Ascending aorta (tissue), 2 donors: ENCODE measurements at regions of chr22 and their contacts with region 1.

Region 1: GRCh38 chr22:24244101-24244787 is 638 bp downstream of the GGT5 start:
- DNase-seq: no peak
- H3K4me3 ChIP-seq: peak overlapping the region; percentile 11 to 30
- H3K27ac ChIP-seq: peak overlapping the region; percentile 92 to 93
- H3K4me1 ChIP-seq: peaks cover 18 to 34% of the 10 kb centered on the region in 2 donors
- H3K27me3 ChIP-seq: no peaks in the 10 kb centered on the region
- CTCF ChIP-seq: no peak

Region 2: DNA sequence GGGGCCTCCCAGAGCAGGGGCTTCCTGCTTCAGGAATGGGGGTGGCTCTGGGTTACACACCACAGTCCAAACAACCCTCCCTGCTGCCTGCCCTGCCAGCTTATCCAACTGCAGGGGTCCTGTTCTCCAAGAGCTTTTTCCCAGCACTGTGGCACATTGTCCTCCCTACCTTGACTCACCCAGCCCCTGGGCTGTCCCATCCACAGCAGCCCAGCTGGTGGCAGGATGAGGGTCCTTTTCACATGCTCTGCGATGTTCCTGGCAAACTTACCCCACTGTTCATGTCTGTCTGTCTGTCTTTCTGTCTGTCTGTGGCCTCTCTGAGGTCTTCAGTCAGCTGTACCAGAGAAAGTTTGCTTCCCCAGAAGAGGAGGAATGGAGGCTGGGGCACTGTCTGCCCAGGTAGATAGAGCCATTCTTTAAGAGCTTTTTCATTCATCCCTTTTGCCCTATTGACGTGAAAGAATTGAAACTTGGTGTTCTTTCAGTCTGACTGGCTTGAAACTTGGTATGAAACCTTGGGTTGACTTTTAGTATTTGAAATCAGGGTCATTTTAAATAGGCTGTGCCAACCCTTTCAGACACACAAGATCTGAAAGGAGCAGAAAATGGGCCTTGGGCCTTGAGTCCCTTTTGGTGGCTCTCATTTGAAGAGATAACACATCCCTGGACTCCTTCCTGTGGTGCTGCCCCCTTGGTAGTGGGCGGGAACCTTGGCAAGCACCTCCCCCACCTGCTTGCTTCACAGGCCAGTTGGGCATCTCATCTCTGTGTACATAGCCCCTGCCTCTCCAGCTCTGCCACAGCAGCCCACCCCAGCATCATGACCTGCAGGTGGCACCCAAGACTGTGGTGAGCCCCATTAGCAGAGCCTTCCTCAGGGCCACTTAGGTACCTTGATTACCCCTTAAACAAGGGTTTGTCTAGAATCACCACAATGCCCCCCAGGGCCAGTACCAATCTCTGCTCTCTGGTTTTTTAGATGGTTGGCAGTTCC is 137.6 kb before region 1 on chr22:
- intact Hi-C with region 1: loop called (anchors 10 kb)
- DNase-seq: no peak
- H3K4me3 ChIP-seq: no peak overlapping the region
- H3K27ac ChIP-seq: peak overlapping the region; percentile 75 to 83
- H3K4me1 ChIP-seq: peaks cover 14 to 17% of the 10 kb centered on the region in 2 donors
- H3K27me3 ChIP-seq: no peaks in the 10 kb centered on the region
- CTCF ChIP-seq: peak in 2 of 3 experiments; percentile 14 to 47

Region 3: GRCh38 chr22:24181996-24182899 is 62.0 kb before region 1 on chr22:
- intact Hi-C with region 1: no loop called
- DNase-seq: no peak
- H3K4me3 ChIP-seq: peak overlapping the region; percentile 28 to 44
- H3K27ac ChIP-seq: peak overlapping the region; percentile 84 to 92
- H3K4me1 ChIP-seq: peaks cover 10 to 54% of the 10 kb centered on the region in 2 donors
- H3K27me3 ChIP-seq: no peaks in the 10 kb centered on the region
- CTCF ChIP-seq: peak in 1 of 3 experiments; percentile 21

Region 4: DNA sequence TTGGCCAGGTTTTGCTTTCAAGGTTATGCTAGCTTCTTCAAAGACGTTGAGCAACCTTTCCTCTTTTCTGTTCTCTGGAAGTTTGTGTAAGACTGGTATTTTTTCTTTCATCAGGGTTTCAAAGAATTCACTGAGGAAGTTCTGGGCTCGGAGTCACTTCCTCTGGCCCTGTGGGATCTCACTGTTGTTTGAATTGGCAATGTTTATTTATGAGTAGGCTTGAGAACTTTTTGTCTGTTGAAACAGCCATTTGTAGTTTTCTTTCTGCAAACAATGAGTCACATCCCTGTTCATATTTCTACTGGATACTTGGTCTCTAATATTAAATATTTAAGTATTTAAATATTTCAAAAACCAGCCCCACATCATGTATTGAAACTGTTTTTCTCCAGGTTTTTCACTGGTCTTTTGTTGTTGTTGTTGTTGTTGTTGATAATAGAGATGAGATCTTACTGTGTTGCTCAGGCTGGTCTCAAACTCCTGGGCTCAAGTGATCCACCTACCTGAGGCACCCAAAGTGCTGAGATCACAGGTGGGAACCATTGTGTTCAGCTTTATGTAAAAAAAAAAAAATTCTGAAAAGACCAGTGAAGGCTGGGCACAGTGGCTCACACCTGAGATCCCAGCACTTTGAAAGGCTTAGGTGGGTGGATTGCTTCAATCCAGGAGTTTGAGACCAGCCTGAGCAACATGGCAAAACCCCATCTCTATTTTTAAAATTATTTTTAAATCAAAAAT is 36.1 kb before region 1 on chr22:
- intact Hi-C with region 1: loop called (anchors 1 kb)
- DNase-seq: peak in 1 of 2 donors; percentile 89
- H3K4me3 ChIP-seq: no peak overlapping the region
- H3K27ac ChIP-seq: peak overlapping the region; percentile 74 to 87
- H3K4me1 ChIP-seq: peaks cover 10 to 25% of the 10 kb centered on the region in 2 donors
- H3K27me3 ChIP-seq: no peaks in the 10 kb centered on the region
- CTCF ChIP-seq: no peak

Region 5: DNA sequence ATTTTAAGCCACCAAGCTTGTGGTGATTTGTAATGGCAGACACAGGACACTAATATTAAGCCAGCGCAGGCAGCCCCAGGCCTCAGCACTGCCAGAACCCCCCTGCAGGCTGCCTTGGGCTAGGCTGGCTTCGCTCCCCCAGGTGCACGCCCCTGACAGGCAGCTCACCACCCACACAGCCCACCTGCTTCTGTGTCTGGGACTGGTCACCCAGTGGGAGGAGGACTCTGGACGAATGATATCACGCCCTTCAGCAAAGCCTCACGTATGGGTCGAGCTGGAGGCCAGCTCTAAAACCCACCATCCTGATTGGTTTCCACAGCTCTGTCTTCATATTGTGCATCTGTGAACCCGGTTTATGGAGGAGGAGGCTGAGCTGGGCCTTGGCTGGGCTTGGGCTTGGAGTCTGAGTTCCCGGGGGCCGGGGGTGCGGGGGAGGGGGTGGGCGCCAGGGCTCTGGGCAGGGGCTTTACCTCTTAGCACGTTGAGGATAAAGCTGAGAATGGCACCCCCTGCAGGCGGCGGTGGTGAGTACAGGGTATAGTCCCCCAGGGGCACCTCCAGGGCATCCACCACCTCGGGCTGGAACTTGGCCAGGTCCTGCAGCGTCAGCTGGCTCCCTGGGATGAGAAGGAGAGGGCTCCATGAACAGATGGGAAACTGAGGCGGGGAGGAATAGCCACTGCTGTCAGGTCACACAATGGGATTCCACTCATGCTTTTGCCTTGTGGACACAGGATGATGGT is 13.2 kb before region 1 on chr22:
- intact Hi-C with region 1: no loop called
- DNase-seq: no peak
- H3K4me3 ChIP-seq: no peak overlapping the region
- H3K27ac ChIP-seq: no peak overlapping the region
- H3K4me1 ChIP-seq: no peaks in the 10 kb centered on the region
- H3K27me3 ChIP-seq: no peaks in the 10 kb centered on the region
- CTCF ChIP-seq: peak in 2 of 3 experiments; percentile 28 to 33